ENCODE measurements at regions of chr12 and their contacts with region 1.

Region 1: GRCh38 chr12:62435303-62436163 is 31.1 kb upstream of the MON2 start:
- DNase-seq: peak; percentile 56
- ATAC-seq: peak; percentile 59
- H3K4me3 ChIP-seq: peak overlapping the region; percentile 41 to 74 (median 56)
- H3K4me3 Mint-ChIP-seq: peak overlapping the region; percentile 91
- H3K27ac ChIP-seq: no peak overlapping the region
- H3K27ac Mint-ChIP-seq: no peak overlapping the region
- H3K4me1 ChIP-seq: peaks cover 17 to 18% of the 10 kb centered on the region in 2 donors
- H3K4me1 Mint-ChIP-seq: peaks cover 20% of the 10 kb centered on the region
- H3K27me3 ChIP-seq: peaks cover 0 to 15% (median 11%) of the 10 kb centered on the region in 4 experiments
- H3K27me3 Mint-ChIP-seq: peaks cover 30% of the 10 kb centered on the region
- CTCF ChIP-seq: peak; percentile 51

Region 2: DNA sequence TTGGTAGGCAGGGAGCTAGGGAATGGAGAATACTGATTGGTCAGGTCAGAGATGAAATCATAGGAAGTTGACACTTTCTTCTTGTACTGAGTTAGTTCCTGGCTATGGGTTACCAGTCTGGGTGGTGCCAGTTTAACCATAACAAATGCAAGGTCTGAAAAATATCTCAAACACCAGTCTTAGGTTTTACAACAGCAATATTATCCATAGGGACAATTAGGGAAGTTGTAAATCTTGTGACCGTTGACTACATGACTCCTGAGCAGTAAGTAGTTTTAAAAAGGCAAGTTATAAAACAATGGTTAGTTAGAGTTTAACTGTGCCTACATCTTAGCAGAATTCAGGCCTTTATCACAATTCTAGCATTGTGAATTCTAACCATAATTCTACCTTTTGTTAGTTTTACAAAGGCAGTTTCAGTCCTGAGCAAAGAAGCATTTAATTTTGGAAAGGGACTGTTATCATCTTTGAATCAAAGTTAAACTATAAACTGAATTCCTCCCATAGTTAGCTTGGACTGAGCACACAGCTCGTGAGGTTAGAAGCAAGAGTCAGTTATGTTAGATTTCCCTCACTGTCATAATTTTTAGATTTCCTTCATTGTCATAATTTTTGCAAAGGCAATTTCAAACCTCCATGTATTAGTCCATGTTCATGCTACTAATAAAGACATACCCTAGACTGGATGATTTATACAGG is 11.4 kb after region 1 on chr12:
- CTCF ChIA-PET with region 1: interaction called, 14 read pairs
- POLR2A ChIA-PET with region 1: no interaction called
- intact Hi-C with region 1: no loop called
- DNase-seq: no peak
- ATAC-seq: no peak
- H3K4me3 ChIP-seq: no peak overlapping the region
- H3K4me3 Mint-ChIP-seq: no peak overlapping the region
- H3K27ac ChIP-seq: no peak overlapping the region
- H3K27ac Mint-ChIP-seq: no peak overlapping the region
- H3K4me1 ChIP-seq: no peaks in the 10 kb centered on the region
- H3K4me1 Mint-ChIP-seq: no peaks in the 10 kb centered on the region
- H3K27me3 ChIP-seq: no peaks in the 10 kb centered on the region
- H3K27me3 Mint-ChIP-seq: peaks cover 6% of the 10 kb centered on the region
- CTCF ChIP-seq: no peak

Region 3: GRCh38 chr12:62581288-62582064 is 145.9 kb after region 1 on chr12:
- CTCF ChIA-PET with region 1: interaction called, 20 read pairs
- POLR2A ChIA-PET with region 1: no interaction called
- intact Hi-C with region 1: loop called (anchors 5 kb)
- DNase-seq: peak; percentile 63
- ATAC-seq: peak; percentile 33
- H3K4me3 ChIP-seq: no peak overlapping the region
- H3K4me3 Mint-ChIP-seq: no peak overlapping the region
- H3K27ac ChIP-seq: no peak overlapping the region
- H3K27ac Mint-ChIP-seq: no peak overlapping the region
- H3K4me1 ChIP-seq: no peaks in the 10 kb centered on the region
- H3K4me1 Mint-ChIP-seq: no peaks in the 10 kb centered on the region
- H3K27me3 ChIP-seq: no peaks in the 10 kb centered on the region
- H3K27me3 Mint-ChIP-seq: no peaks in the 10 kb centered on the region
- CTCF ChIP-seq: peak; percentile 82

Region 4: GRCh38 chr12:62793256-62794217 is 358.0 kb after region 1 on chr12:
- CTCF ChIA-PET with region 1: interaction called, 169 read pairs
- POLR2A ChIA-PET with region 1: no interaction called
- intact Hi-C with region 1: no loop called
- DNase-seq: peak; percentile 80
- ATAC-seq: peak; percentile 70
- H3K4me3 ChIP-seq: no peak overlapping the region
- H3K4me3 Mint-ChIP-seq: no peak overlapping the region
- H3K27ac ChIP-seq: no peak overlapping the region
- H3K27ac Mint-ChIP-seq: no peak overlapping the region
- H3K4me1 ChIP-seq: no peaks in the 10 kb centered on the region
- H3K4me1 Mint-ChIP-seq: no peaks in the 10 kb centered on the region
- H3K27me3 ChIP-seq: no peaks in the 10 kb centered on the region
- H3K27me3 Mint-ChIP-seq: no peaks in the 10 kb centered on the region
- CTCF ChIP-seq: peak; percentile 97

Region 5: DNA sequence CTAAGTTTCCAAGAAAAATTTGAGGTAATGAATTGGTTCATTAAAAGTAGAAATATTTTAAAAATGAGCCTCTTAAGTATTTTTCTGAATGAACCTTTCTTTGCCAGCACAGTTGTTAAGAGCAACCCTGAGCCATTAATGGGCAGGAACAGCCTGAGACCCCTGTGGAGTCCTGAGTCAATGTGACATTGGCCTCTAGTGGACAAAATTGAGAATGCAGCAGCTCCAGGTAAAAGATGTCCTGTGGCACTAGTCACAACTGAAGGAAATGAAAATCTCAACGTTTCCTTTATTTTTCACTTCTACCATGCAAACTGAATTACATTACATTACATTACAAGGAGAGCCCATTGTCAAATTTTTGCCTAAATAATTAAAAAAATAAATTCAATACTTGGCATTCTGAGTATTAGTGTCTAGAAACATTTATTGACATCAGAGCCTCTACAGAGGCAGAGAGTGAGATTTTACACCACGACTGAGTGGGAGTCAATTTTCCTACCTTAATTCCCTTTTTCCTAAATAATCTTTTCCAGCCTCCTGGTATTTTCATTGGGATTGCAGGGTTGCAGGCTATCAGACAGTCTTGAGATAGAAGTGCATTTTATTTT is 363.7 kb after region 1 on chr12:
- CTCF ChIA-PET with region 1: interaction called, 169 read pairs
- POLR2A ChIA-PET with region 1: no interaction called
- intact Hi-C with region 1: loop called (anchors 1 kb)
- DNase-seq: peak; percentile 68
- ATAC-seq: peak; percentile 80
- H3K4me3 ChIP-seq: no peak overlapping the region
- H3K4me3 Mint-ChIP-seq: no peak overlapping the region
- H3K27ac ChIP-seq: no peak overlapping the region
- H3K27ac Mint-ChIP-seq: no peak overlapping the region
- H3K4me1 ChIP-seq: no peaks in the 10 kb centered on the region
- H3K4me1 Mint-ChIP-seq: no peaks in the 10 kb centered on the region
- H3K27me3 ChIP-seq: no peaks in the 10 kb centered on the region
- H3K27me3 Mint-ChIP-seq: no peaks in the 10 kb centered on the region
- CTCF ChIP-seq: peak; percentile 98

Region 6: DNA sequence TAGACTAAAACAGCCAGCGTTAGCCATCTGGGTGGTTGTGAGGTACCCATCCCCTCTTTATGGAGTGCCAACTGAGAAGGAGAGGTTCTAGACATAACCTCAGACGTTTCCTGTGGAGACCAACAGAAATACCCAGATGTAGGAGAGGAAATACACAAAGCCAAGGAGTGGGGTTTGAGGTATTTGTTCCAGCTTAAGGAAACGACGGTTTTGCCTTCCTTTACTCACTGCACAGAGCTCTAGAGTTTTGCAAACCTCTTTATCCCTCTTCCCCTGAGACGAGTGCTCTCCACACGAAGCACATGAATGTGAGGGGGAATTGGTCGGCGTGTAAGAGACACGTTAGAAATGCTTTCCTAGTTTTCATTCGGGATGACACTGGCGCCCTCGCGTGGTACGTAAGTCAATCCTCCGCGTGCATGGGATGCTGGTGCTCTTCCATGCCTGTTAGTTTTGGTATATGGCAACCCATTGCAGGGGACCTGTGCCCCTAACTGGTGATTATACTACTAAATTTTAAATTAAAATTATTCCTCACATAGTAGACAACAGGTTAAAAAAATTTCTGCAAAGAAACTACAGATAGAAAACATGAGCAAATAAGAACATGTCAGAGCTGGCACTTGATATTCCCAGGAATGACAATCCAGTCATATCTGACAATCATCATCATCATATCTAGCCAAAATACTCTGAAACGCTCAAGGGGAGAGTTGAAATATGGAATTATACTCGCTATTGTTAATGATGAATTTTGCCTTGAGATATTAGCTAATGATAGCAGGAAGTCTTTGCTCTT is 377.7 kb after region 1 on chr12:
- CTCF ChIA-PET with region 1: interaction called, 23 read pairs
- POLR2A ChIA-PET with region 1: no interaction called
- intact Hi-C with region 1: loop called (anchors 1 kb)
- DNase-seq: peak; percentile 49
- ATAC-seq: no peak
- H3K4me3 ChIP-seq: peak overlapping the region in 3 of 5 experiments; percentile 3 to 30 (median 29)
- H3K4me3 Mint-ChIP-seq: peak overlapping the region; percentile 70
- H3K27ac ChIP-seq: no peak overlapping the region
- H3K27ac Mint-ChIP-seq: no peak overlapping the region
- H3K4me1 ChIP-seq: peaks cover 6 to 7% of the 10 kb centered on the region in 2 donors
- H3K4me1 Mint-ChIP-seq: peaks cover 7% of the 10 kb centered on the region
- H3K27me3 ChIP-seq: peaks cover 0 to 8% (median 0%) of the 10 kb centered on the region in 4 experiments
- H3K27me3 Mint-ChIP-seq: peaks cover 14% of the 10 kb centered on the region
- CTCF ChIP-seq: peak; percentile 65

Measured in B cell (primary cell).